ENCODE measurements at regions of chr7 and their contacts with region 1.

Region 1: DNA sequence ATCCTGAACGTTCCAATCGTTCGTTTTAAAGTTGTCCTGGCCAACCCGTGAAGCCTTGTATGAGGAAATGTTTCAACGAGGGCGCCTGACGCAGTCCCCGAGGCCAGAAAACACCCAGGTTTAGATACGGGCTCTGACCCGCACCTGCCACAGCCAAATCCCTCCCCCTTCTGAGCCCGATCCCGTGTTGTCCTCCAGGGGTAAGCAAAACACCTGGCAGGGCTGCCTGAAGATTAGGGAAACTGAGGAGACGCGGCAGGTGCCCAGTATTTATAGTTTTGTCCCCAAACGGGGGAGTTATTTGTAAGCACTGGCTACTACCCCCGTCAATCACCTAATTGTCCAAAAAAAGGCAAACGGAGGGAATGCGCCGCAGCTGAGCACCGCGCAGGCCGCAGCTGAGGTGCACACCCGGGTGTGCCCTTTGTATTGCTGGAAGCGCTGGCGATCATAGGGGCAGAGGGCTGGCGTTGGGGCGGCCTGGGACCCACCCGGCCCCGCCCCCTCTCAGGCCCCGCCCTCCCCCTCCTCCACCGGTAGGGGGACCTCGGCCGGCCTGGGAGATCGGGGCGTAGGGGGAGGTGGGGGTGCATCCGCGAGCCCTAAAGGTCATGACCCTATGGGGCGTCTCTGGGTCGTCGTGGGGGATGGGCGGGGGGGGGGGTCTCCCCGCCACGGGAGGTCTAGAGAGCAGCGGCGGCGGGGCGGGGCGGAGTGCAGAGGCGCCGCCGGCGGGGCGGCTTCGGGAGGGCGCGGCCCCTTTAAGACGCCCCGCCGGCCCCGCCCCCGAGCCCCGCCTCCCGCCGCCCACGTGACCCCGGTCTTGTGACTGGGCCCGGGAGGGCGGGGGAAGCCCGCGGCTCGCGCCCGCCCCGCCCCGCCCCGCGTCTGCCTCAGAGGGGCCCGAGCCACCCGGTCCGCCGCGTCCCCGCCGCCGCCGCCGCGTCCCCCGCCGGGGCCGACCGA is at the start of gene BRI3:
- DNase-seq: peak; percentile 70 to 88
- H3K4me3 ChIP-seq: peak within 1 kb of the TSS; percentile 87
- H3K27ac ChIP-seq: peak within 1 kb of the TSS; percentile 97
- H3K4me1 ChIP-seq: peaks cover 37% of the 10 kb centered on the region
- H3K27me3 ChIP-seq: no peaks in the 10 kb centered on the region
- CTCF ChIP-seq: no peak
- total RNA-seq, gene BRI3: 239 and 255 TPM in 2 replicates

Region 2: DNA sequence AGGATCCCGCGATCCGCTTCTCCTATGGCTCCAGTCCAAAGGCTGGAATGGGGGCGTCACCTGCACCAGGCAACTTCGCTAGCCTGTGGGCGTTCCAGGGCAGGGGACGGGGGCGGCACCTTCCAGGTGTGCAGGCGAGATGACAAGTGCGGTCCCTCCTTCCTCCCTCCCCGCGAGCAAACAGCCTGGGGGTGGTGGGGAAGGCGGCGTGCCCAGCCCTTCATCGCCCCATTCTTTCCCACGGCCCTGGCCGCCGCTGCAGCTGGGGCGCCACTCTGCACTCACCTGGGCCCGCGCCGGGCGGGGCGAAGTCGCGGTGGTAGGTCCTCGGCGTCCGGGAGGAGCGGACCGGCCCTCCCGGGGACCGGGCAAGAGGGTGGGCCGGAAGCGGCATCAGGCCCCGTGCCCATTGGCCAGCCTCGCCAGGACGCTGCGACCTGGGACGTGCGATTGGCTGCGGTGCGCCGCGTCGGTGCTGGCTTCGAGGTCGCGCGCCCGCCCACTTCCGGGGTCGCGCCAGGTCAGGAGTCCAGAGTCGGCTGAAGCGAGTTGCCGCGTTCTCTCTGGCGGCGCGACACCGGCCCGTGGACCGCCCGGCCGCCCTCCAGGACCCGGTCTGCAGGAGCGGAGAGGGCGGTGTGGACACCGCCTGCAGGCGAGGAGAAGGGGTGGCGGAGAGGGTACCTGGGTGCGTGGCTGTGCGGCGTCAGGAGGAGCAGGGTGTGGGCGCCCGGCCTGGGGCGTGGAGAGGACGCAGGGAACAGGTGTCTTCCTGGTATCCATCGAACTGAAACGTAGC is 29.0 kb before region 1 on chr7 and contains the start of gene TECPR1:
- CTCF ChIA-PET with region 1: interaction called, 11 read pairs
- POLR2A ChIA-PET with region 1: interaction called, 4 read pairs
- intact Hi-C with region 1: loop called (anchors 1 kb)
- DNase-seq: peak; percentile 87 to 99
- H3K4me3 ChIP-seq: peak within 1 kb of the TSS; percentile 100
- H3K27ac ChIP-seq: peak within 1 kb of the TSS; percentile 71
- H3K4me1 ChIP-seq: peaks cover 25% of the 10 kb centered on the region
- H3K27me3 ChIP-seq: no peaks in the 10 kb centered on the region
- CTCF ChIP-seq: no peak
- total RNA-seq, gene TECPR1: 22.7 and 27.4 TPM in 2 replicates

Region 3: GRCh38 chr7:98354511-98355257 is 73.6 kb after region 1 on chr7:
- CTCF ChIA-PET with region 1: no interaction called
- POLR2A ChIA-PET with region 1: no interaction called
- intact Hi-C with region 1: loop called (anchors 5 kb)
- DNase-seq: peak; percentile 96 to 97
- H3K4me3 ChIP-seq: peak overlapping the region; percentile 52
- H3K27ac ChIP-seq: peak overlapping the region; percentile 94
- H3K4me1 ChIP-seq: peaks cover 93% of the 10 kb centered on the region
- H3K27me3 ChIP-seq: no peaks in the 10 kb centered on the region
- CTCF ChIP-seq: no peak

Region 4: DNA sequence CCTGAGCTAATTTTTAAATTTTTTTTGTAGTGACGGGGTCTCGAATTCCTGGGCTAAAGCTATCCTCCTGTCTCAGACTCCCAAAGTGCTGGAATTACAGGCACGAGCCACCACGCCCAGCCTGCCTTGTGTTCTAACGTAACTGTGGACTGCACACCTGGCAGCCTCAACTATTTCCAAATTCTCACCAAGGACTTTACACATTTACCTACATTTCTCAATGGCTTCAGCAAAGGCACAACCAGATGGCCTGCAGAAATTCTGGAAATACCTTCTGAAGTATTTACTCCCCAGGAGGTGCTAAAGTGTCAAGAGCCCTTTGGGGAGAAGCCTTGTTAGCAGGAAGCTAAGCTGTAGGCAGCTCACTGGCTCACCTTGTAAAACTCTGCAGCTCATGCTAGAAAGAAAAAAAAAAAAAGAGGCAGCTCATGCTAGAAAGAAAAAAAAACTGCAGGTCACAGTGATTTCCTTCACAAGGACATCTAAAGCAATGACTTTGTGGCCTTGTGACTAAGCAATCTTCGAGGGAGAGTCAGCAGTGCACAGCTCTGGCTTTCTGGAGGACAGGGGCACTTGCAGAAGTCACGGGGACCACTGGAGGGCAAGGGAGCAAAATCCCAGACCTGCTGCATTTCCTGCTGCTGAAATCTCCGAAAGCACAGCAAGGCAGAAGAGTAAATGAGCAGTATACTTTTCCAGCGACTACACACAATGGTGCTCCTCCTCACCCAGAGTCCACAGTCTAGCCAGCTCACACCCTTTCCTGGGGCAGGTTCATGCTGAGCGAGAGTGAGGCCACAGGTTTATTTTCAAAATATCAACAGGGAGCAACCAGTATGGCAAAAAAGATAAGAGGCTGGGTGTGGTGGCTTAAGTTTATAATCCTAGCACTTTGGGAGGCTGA is 79.4 kb after region 1 on chr7:
- CTCF ChIA-PET with region 1: interaction called, 3 read pairs
- POLR2A ChIA-PET with region 1: no interaction called
- intact Hi-C with region 1: loop called (anchors 2 kb)
- DNase-seq: peak; percentile 82 to 99
- H3K4me3 ChIP-seq: no peak overlapping the region
- H3K27ac ChIP-seq: peak overlapping the region; percentile 89
- H3K4me1 ChIP-seq: peaks cover 80% of the 10 kb centered on the region
- H3K27me3 ChIP-seq: no peaks in the 10 kb centered on the region
- CTCF ChIP-seq: no peak

Region 5: GRCh38 chr7:98514211-98515031 is 233.3 kb after region 1 on chr7:
- CTCF ChIA-PET with region 1: no interaction called
- POLR2A ChIA-PET with region 1: no interaction called
- intact Hi-C with region 1: no loop called
- DNase-seq: no peak
- H3K4me3 ChIP-seq: no peak overlapping the region
- H3K27ac ChIP-seq: no peak overlapping the region
- H3K4me1 ChIP-seq: no peaks in the 10 kb centered on the region
- H3K27me3 ChIP-seq: peaks cover 54% of the 10 kb centered on the region
- CTCF ChIP-seq: no peak

Region 6: GRCh38 chr7:98872328-98872924 is 591.4 kb after region 1 on chr7:
- CTCF ChIA-PET with region 1: no interaction called
- POLR2A ChIA-PET with region 1: no interaction called
- intact Hi-C with region 1: loop called (anchors 5 kb)
- DNase-seq: peak in 1 of 2 experiments; percentile 26
- H3K4me3 ChIP-seq: no peak overlapping the region
- H3K27ac ChIP-seq: no peak overlapping the region
- H3K4me1 ChIP-seq: no peaks in the 10 kb centered on the region
- H3K27me3 ChIP-seq: no peaks in the 10 kb centered on the region
- CTCF ChIP-seq: peak; percentile 61

Measured in PC-9 (cell line).